ENCODE measurements at regions of chr1 and their contacts with region 1.

Region 1: DNA sequence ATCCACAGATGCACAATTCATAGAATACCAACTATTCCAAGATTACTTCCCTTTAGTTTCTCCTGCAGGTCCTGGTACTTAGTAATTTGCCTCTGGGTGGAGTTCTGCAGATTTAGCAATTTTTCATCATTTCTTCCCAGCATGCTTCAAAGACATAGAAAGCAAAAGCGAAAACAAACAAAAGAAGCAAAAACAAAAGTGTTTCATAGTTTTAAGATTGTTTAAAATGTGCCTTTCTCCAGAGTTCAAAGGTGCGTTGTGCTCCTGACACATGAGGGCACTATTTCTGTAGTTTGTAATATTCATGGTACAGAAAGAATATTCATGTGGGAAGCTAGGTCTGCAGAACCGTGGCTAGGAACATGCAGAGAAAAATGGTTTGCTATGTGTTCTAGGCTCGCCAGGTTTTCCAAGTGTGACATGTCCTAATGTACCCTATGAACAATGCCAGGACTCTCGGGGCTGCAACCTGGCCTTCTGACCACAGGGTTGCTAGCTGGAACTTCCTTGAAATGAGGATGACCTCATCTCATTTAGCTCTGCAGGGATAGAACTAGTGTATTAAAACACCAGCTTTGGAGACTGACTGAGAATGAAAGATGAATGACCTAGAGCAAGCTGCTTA is 30.0 kb upstream of the RCSD1 start:
- DNase-seq: peak; percentile 65
- CTCF ChIP-seq: peak; percentile 74

Region 2: DNA sequence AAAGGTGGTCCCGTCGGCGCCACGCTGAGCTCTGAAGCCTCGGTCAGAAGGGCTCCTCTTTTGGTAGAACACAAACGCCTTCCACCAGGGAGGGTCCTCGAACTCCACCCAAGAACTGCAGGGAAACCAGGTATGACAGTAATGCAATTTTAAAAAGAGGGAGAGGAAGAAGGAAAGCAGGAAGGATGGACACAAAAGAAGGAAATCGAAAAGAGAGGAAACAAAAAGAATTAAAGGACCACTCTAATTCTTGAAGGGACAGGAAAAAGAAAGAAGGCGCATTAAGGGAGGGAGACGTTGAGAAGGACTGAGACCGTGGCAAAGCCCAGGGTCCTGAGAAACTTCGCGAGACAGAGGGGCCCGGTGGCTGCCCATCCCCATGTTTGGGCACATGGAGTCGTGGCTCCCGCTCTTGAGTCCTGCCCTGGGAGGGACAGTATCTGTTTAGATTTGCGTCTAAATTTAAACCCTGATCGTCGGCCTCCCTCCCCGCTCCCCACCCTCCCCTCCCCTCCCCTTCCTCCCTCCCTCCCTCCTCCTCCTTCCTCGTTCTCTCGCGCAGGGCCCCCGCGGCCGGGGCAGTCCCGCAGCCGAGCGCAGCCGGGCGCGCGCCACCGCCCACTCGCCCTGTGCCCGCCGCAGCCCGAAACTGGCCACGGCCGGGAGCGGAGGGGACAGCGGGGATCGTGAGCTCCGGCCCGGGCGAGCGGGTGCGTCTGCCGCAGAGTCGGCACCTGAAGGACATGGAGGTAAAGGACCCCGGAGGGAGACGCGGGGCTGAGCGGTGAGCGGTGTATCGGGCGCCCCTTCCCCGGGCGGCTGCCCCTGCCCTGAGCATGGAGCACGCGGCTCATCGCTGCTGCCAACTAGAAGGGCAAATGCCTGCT is 29.9 kb after region 1 on chr1 and contains the start of gene RCSD1:
- CTCF ChIA-PET with region 1: interaction called, 42 read pairs
- POLR2A ChIA-PET with region 1: interaction called, 3 read pairs
- DNase-seq: peak; percentile 79
- CTCF ChIP-seq: no peak

Region 3: DNA sequence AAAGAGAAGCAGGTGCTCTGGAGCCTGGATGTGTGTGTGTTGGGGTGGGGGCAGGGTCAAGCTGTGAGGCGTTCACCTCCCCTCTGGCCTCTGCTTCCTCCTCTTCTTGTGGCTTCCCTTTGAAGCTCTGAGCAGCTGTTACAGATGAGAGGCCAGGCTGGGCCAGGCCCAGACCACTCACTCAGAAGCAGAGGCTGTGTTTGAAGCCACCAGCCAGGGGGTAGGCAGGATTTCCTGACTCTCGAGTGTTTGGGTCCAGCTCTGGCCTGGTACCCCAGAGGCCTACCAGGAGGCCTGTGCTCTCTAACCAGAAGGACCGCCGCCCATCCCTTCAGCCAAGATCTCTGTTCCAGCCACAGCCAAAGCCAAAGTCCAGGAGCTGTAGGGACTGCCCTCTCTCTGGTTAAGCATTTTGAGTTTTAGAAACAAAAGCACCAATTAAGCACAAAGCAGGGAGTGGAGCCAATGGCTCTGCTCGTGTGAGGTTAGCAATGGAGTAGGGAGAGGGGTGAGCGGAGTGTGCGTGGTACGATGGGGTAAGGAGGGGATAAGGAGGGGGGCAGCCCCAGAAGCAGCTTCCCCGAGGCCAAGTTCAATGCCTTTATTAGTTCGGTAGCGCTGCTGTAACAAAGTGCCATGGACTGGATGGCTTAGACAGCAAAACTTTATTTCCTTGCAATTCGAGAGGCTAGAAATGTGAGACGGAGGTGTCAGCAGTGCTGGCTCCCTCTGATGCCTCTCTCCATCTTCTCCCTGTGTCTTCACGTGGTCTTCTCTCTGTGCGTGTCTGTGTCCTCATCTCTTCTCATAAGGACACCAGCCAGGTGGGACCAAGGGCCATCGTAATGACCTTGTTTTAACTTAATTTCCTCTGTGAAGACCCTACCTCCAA is 50.4 kb after region 1 on chr1:
- CTCF ChIA-PET with region 1: interaction called, 15 read pairs
- POLR2A ChIA-PET with region 1: no interaction called
- DNase-seq: peak; percentile 44
- CTCF ChIP-seq: no peak

Region 4: DNA sequence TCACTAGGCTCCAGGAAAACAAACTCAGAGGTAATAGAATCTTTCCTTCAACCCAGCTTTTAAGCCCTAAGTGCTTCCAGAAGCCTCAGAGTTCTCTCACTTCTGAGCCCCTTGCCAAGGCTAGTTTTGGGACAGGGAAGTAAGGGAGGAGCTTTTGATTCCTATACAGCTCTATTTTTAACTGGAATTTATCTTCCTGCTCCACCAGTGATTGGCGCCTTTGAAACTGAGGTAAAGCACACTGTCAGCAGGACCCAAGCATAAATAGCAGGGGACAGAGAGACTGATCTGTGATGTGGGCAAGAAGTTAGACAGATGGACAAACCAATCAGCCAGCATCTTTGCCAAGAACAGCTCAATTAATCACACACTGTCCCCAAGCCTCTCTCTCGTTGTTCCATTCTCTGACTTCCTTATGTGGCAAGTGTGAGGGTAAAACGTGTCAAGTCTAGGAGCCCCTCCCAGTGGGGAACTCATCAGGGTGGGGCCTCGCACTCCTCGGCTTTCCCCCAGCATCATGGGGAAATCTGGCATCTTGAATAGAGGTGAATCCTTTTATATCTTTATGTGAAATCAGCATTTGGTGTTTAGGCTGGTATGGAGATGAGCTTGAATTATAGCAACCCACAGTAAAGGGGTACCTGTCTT is 81.5 kb after region 1 on chr1:
- CTCF ChIA-PET with region 1: interaction called, 102 read pairs
- POLR2A ChIA-PET with region 1: no interaction called
- DNase-seq: no peak
- CTCF ChIP-seq: no peak